CD4-positive, alpha-beta memory T cell (primary cell): ENCODE measurements at regions of chr20 and their contacts with region 1.

Region 1: GRCh38 chr20:12056839-12057238 is 139.1 kb downstream of the BTBD3 start:
- DNase-seq: no peak
- H3K4me3 ChIP-seq: no peak overlapping the region
- H3K4me3 Mint-ChIP-seq: no peak overlapping the region
- H3K27ac ChIP-seq: no peak overlapping the region
- H3K27ac Mint-ChIP-seq: no peak overlapping the region
- H3K4me1 ChIP-seq: no peaks in the 10 kb centered on the region
- H3K4me1 Mint-ChIP-seq: no peaks in the 10 kb centered on the region
- H3K27me3 ChIP-seq: no peaks in the 10 kb centered on the region
- H3K27me3 Mint-ChIP-seq: no peaks in the 10 kb centered on the region

Region 2: DNA sequence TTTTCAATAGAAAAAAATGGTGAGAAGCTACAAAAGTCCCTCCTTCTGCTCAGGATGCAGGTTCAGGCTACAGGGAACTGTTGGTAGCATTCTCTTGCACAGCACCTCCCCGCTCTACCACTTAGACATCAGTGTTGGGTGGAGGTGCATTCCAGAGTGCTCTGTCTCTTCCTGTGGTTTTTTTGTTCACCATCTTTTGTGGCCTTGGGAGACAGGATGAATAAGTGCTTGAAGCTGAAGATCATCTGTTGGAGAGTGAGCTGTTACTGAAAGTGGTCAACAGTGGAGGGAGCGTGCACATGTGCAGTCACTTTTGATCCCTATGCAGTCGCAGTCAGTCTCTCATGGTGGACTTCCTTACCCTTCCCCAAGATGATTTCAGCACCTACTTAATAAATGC is 155.7 kb before region 1 on chr20:
- CTCF ChIA-PET with region 1: no interaction called
- POLR2A ChIA-PET with region 1: no interaction called
- intact Hi-C with region 1: no loop called
- DNase-seq: no peak
- H3K4me3 ChIP-seq: no peak overlapping the region
- H3K4me3 Mint-ChIP-seq: no peak overlapping the region
- H3K27ac ChIP-seq: no peak overlapping the region
- H3K27ac Mint-ChIP-seq: no peak overlapping the region
- H3K4me1 ChIP-seq: no peaks in the 10 kb centered on the region
- H3K4me1 Mint-ChIP-seq: no peaks in the 10 kb centered on the region
- H3K27me3 ChIP-seq: no peaks in the 10 kb centered on the region
- H3K27me3 Mint-ChIP-seq: no peaks in the 10 kb centered on the region

Region 3: GRCh38 chr20:11912013-11912658 is 144.7 kb before region 1 on chr20:
- CTCF ChIA-PET with region 1: no interaction called
- POLR2A ChIA-PET with region 1: no interaction called
- intact Hi-C with region 1: no loop called
- DNase-seq: no peak
- H3K4me3 ChIP-seq: no peak overlapping the region
- H3K4me3 Mint-ChIP-seq: no peak overlapping the region
- H3K27ac ChIP-seq: no peak overlapping the region
- H3K27ac Mint-ChIP-seq: no peak overlapping the region
- H3K4me1 ChIP-seq: no peaks in the 10 kb centered on the region
- H3K4me1 Mint-ChIP-seq: no peaks in the 10 kb centered on the region
- H3K27me3 ChIP-seq: no peaks in the 10 kb centered on the region
- H3K27me3 Mint-ChIP-seq: no peaks in the 10 kb centered on the region

Region 4: GRCh38 chr20:12016291-12016690 is 40.5 kb before region 1 on chr20:
- CTCF ChIA-PET with region 1: no interaction called
- POLR2A ChIA-PET with region 1: no interaction called
- intact Hi-C with region 1: loop called (anchors 1 kb)
- DNase-seq: no peak
- H3K4me3 ChIP-seq: no peak overlapping the region
- H3K4me3 Mint-ChIP-seq: no peak overlapping the region
- H3K27ac ChIP-seq: no peak overlapping the region
- H3K27ac Mint-ChIP-seq: no peak overlapping the region
- H3K4me1 ChIP-seq: no peaks in the 10 kb centered on the region
- H3K4me1 Mint-ChIP-seq: no peaks in the 10 kb centered on the region
- H3K27me3 ChIP-seq: no peaks in the 10 kb centered on the region
- H3K27me3 Mint-ChIP-seq: no peaks in the 10 kb centered on the region